Colonic mucosa (tissue), 4 donors: ENCODE measurements at regions of chr12 and their contacts with region 1.

Region 1: GRCh38 chr12:116818948-116819832 is 62.1 kb downstream of the HRK start:
- DNase-seq: peak; percentile 87
- H3K4me3 ChIP-seq: peak overlapping the region; percentile 62
- H3K27ac ChIP-seq: peak overlapping the region; percentile 68
- H3K4me1 ChIP-seq: no peaks in the 10 kb centered on the region
- H3K27me3 ChIP-seq: no peaks in the 10 kb centered on the region
- CTCF ChIP-seq: no peak

Region 2: GRCh38 chr12:116492703-116493324 is 326.4 kb before region 1 on chr12:
- intact Hi-C with region 1: no loop called
- DNase-seq: no peak
- H3K4me3 ChIP-seq: no peak overlapping the region
- H3K27ac ChIP-seq: no peak overlapping the region
- H3K4me1 ChIP-seq: no peaks in the 10 kb centered on the region
- H3K27me3 ChIP-seq: no peaks in the 10 kb centered on the region
- CTCF ChIP-seq: no peak

Region 3: DNA sequence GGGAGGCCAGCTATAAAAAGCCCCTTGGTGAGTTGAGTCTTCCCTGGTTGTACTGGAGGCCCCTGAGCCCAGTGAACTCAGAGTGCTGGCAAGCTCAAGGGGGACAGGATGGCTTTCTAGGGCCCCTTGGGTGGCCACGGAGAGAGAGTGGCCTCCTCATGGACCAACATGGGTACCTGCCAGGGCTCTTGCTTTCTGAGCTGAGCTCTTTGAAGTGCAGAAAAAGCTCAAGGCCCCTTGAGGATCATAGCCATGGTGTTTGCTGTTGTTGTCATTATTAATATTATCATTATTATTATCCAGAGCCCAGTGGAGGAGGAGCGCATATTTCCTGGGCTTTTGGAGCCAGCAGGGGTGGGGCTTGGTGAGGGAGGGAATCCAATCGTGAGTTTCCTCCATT is 74.4 kb before region 1 on chr12:
- intact Hi-C with region 1: loop called (anchors 5 kb)
- DNase-seq: no peak
- H3K4me3 ChIP-seq: no peak overlapping the region
- H3K27ac ChIP-seq: no peak overlapping the region
- H3K4me1 ChIP-seq: no peaks in the 10 kb centered on the region
- H3K27me3 ChIP-seq: no peaks in the 10 kb centered on the region
- CTCF ChIP-seq: no peak